ENCODE measurements at regions of chr14 and their contacts with region 1.

Region 1: GRCh38 chr14:51979088-51979709 is 10.1 kb upstream of the RTRAF start:
- DNase-seq: peak; percentile 43
- ATAC-seq: peak; percentile 86
- H3K4me3 ChIP-seq: no peak overlapping the region
- H3K27ac ChIP-seq: no peak overlapping the region
- H3K4me1 ChIP-seq: peaks cover 3% of the 10 kb centered on the region
- H3K27me3 ChIP-seq: no peaks in the 10 kb centered on the region
- CTCF ChIP-seq: peak; percentile 86 to 91 (median 87)
- EP300 ChIP-seq: no peak
- POLR2A ChIP-seq: no peak
- RAD21 ChIP-seq: peak; percentile 92

Region 2: DNA sequence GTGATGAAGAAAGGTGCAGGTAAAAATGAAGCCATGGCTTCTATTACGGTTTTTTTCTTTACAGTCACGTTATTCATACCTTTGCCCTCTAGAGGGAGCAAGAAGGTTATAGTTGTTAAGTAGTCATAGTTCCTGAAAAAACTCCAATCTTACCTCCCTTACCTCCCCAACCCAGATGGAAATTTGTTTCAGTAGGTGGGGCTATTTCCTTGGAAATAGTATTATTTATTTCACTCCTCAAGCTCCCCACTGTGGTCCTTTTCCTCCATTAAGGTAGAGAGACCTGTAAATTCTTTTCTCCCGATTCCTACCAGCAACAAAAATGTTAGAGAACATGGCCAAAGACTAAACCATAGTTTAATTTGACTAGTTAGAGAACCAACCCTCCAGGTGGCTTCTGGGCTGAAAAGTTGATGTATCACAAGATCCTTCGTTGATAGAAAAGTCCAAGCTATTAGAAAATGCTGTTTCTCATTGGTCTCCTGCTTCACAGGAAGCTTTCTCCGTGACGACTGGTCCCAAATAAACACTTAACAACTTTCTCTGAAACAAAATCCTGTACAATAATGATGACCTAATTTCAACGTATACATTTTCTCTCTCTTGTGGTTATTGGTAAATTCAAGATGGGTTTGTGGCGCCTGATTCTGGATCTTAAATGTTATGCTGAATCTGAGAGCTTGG is 695.7 kb before region 1 on chr14:
- CTCF ChIA-PET with region 1: interaction called, 10 read pairs
- POLR2A ChIA-PET with region 1: no interaction called
- RAD21 ChIA-PET with region 1: no interaction called
- SMC1A ChIA-PET with region 1: interaction called, 19 read pairs
- in situ Hi-C with region 1: no loop called
- intact Hi-C with region 1: loop called (anchors 5 kb)
- DNase-seq: no peak
- ATAC-seq: peak; percentile 55; the same call in 2 of the 3 replicates
- H3K4me3 ChIP-seq: no peak overlapping the region
- H3K27ac ChIP-seq: no peak overlapping the region
- H3K4me1 ChIP-seq: peaks cover 8% of the 10 kb centered on the region
- H3K27me3 ChIP-seq: no peaks in the 10 kb centered on the region
- CTCF ChIP-seq: peak; percentile 53 to 74 (median 55); a peak in 5 of 6 replicates
- EP300 ChIP-seq: no peak
- POLR2A ChIP-seq: no peak
- RAD21 ChIP-seq: peak; percentile 71

Region 3: DNA sequence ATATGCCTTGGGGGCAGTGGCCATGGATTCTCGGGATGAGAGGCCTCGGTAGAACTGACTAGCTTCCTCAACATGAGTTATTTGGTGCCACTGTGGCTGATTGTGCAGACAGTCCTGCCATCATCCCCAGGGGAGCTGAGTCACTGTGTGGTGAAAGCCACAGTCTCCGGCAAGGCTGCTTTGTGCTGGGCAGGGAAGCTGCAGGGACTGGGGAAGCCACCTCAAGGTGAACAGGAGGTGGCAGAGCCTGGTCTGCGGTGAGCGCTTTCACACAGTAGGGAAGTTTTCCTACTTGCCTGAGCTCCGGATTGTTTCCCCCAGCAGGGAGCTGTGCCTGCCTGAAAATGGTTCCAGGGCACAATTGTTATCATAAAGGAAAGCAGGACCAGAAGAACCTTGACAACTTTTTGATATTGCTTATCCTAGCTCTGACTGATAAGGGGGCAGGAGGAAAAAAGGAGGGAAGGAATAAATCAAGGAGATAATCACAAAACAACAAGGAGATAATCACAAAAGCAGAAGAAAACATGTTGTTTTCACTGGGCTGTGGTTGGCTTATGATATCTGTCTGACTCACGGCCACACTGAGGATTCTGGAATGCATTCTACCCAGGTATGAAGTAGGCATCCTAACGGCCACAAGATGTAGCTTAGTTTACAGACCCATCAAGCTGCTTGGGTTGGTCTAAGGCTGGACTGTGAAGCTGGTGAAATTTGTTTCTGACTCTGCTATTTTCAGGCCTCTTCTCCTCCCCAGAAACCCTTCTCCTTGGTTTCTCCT is 151.0 kb before region 1 on chr14:
- CTCF ChIA-PET with region 1: interaction called, 33 read pairs
- POLR2A ChIA-PET with region 1: no interaction called
- RAD21 ChIA-PET with region 1: interaction called, 17 read pairs
- SMC1A ChIA-PET with region 1: interaction called, 22 read pairs
- in situ Hi-C with region 1: no loop called
- intact Hi-C with region 1: no loop called
- DNase-seq: peak; percentile 74
- ATAC-seq: peak; percentile 99
- H3K4me3 ChIP-seq: no peak overlapping the region
- H3K27ac ChIP-seq: no peak overlapping the region
- H3K4me1 ChIP-seq: no peaks in the 10 kb centered on the region
- H3K27me3 ChIP-seq: no peaks in the 10 kb centered on the region
- CTCF ChIP-seq: peak in 1 of 3 experiments; percentile 26; a peak in 2 of 6 replicates
- EP300 ChIP-seq: peak in 1 of 2 experiments; percentile 17; a peak in 1 of 4 replicates
- POLR2A ChIP-seq: no peak
- RAD21 ChIP-seq: 0 out of 2 replicates have a peak, but pooled peaks have one; percentile 3

Region 4: GRCh38 chr14:51860164-51860824 is 118.9 kb before region 1 on chr14 and contains the start of gene GNG2:
- CTCF ChIA-PET with region 1: interaction called, 33 read pairs
- POLR2A ChIA-PET with region 1: interaction called, 3 read pairs
- RAD21 ChIA-PET with region 1: interaction called, 26 read pairs
- SMC1A ChIA-PET with region 1: interaction called, 26 read pairs
- in situ Hi-C with region 1: no loop called
- intact Hi-C with region 1: loop called (anchors 5 kb)
- DNase-seq: peak; percentile 71
- ATAC-seq: peak; percentile 88
- H3K4me3 ChIP-seq: peak within 1 kb of the TSS; percentile 90
- H3K27ac ChIP-seq: peak within 1 kb of the TSS; percentile 82
- H3K4me1 ChIP-seq: peaks cover 12% of the 10 kb centered on the region
- H3K27me3 ChIP-seq: no peaks in the 10 kb centered on the region
- CTCF ChIP-seq: no peak
- EP300 ChIP-seq: no peak
- POLR2A ChIP-seq: peak; percentile 94
- RAD21 ChIP-seq: no peak
- polyA plus RNA-seq, gene GNG2: 31.6 to 42.0 TPM

Region 5: DNA sequence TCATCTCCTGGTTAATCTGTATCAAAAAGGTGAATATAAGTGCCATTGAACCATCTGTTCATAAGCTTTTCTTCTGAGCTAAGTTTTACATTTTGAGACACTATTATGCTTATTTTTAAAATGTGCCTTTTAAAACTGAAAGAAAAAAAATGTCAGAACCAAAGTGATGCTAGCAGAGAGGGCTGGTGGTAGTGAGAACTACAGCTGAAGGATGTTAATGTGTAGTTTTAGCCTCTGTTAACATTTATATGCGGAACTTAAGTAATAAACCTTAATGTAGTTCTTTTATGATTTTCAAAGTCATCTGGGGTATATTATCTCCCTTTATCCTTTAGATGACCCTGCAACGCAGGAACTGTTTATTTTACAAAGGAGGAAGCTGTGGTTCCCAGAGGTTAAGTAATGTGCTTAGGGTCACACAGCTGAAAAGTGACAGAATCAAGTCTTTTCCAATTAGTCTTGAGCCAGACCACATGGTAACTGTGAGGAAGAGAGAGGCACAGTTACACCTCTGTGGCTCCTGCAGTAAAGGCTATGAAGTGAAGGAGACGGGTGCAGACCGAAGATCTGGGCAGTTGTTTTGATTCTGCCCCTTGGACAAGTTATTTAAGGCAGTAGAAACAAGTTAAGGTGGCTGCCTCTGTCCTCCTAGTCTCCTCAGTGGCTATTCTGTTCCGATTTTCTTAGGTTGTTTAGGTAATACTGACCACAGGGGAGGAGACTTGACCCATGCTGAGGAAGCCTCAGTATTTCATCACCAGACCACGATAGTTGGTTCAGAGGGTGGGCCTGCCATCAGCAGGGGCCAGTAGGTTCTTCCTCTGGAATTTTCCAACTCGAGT is 94.9 kb before region 1 on chr14:
- CTCF ChIA-PET with region 1: interaction called, 23 read pairs
- POLR2A ChIA-PET with region 1: no interaction called
- RAD21 ChIA-PET with region 1: interaction called, 7 read pairs
- SMC1A ChIA-PET with region 1: interaction called, 9 read pairs
- in situ Hi-C with region 1: no loop called
- intact Hi-C with region 1: no loop called
- DNase-seq: no peak
- ATAC-seq: peak; percentile 84
- H3K4me3 ChIP-seq: peak overlapping the region; percentile 4; the same call in 1 of the 2 replicates
- H3K27ac ChIP-seq: peak overlapping the region; percentile 34
- H3K4me1 ChIP-seq: peaks cover 38% of the 10 kb centered on the region
- H3K27me3 ChIP-seq: no peaks in the 10 kb centered on the region
- CTCF ChIP-seq: no peak
- EP300 ChIP-seq: peak in 1 of 2 experiments; percentile 56; a peak in 1 of 4 replicates
- POLR2A ChIP-seq: no peak
- RAD21 ChIP-seq: no peak

Region 6: DNA sequence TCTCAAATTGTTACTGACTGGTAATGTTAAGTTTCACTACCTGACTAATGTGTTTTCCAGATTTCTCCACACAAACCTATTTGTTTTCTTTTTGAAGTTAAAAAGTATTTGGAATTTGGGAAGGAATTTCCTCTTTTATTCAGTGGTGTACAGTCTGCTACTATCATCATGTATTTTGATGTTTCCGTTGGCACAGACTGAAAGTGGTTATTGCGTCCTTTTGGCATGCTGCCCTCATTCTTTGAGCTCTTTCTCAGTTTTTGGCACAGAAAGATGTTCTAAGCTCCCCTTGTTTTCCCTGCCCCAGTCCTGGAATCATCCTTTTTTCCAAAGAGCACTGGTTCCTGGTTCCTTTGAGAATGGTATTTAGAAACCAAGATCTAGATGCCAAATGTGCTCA is 21.2 kb before region 1 on chr14:
- CTCF ChIA-PET with region 1: interaction called, 11 read pairs
- POLR2A ChIA-PET with region 1: no interaction called
- RAD21 ChIA-PET with region 1: interaction called, 5 read pairs
- SMC1A ChIA-PET with region 1: interaction called, 7 read pairs
- in situ Hi-C with region 1: no loop called
- intact Hi-C with region 1: no loop called
- DNase-seq: no peak
- ATAC-seq: no peak
- H3K4me3 ChIP-seq: no peak overlapping the region
- H3K27ac ChIP-seq: no peak overlapping the region
- H3K4me1 ChIP-seq: no peaks in the 10 kb centered on the region
- H3K27me3 ChIP-seq: no peaks in the 10 kb centered on the region
- CTCF ChIP-seq: no peak
- EP300 ChIP-seq: no peak
- POLR2A ChIP-seq: no peak
- RAD21 ChIP-seq: no peak

Region 7: DNA sequence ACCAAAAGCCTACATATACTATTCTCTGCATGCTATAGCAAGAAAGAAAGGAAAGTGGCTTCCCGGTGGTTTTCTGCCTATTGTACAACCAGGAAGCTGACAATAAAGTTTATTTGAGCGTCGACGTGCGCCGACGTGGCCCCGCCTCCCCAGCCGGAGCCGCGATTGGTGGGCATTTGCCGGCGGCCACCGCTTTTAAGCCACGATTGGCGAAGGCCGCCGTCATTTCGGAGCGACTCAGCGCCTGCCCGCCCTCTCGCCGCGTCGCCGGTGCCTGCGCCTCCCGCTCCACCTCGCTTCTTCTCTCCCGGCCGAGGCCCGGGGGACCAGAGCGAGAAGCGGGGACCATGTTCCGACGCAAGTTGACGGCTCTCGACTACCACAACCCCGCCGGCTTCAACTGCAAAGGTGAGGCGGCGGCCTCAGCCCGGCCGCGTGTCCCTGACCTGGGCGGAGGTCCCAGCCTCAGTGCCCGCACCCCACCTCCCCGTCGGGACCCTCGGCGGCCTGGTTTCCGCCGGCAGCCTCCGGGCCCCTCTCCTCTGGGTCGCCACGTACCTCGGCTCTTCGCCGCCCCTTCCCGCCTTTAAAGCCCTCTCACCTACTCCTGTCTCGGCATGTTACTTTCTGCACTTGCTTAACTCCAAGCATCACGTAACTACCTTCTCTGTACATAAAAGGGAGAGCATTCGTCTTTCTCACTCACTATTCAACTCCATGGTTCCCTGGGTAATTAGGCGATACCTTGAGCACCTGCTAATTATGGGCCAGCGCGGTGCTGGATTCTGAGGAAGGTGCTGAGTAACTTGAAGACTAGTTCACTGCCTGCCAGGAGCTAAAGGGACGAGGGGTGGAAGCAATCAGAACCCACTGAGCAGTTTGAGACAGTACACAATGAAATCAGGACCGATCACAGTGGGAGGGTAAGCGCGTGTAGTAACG is 10.4 kb after region 1 on chr14 and contains the start of gene RTRAF:
- CTCF ChIA-PET with region 1: interaction called, 67 read pairs
- POLR2A ChIA-PET with region 1: interaction called, 3 read pairs
- RAD21 ChIA-PET with region 1: interaction called, 5 read pairs
- SMC1A ChIA-PET with region 1: interaction called, 16 read pairs
- in situ Hi-C with region 1: no loop called
- intact Hi-C with region 1: no loop called
- DNase-seq: peak; percentile 69
- ATAC-seq: peak; percentile 95
- H3K4me3 ChIP-seq: peak within 1 kb of the TSS; percentile 89
- H3K27ac ChIP-seq: peak within 1 kb of the TSS; percentile 88
- H3K4me1 ChIP-seq: peaks cover 6% of the 10 kb centered on the region
- H3K27me3 ChIP-seq: no peaks in the 10 kb centered on the region
- CTCF ChIP-seq: no peak
- EP300 ChIP-seq: no peak
- POLR2A ChIP-seq: peak; percentile 97
- RAD21 ChIP-seq: no peak
- polyA plus RNA-seq, gene RTRAF: 358 to 395 TPM

Region 8: GRCh38 chr14:52031781-52032180 is 52.6 kb after region 1 on chr14:
- CTCF ChIA-PET with region 1: no interaction called
- POLR2A ChIA-PET with region 1: no interaction called
- RAD21 ChIA-PET with region 1: no interaction called
- SMC1A ChIA-PET with region 1: no interaction called
- in situ Hi-C with region 1: no loop called
- intact Hi-C with region 1: no loop called
- DNase-seq: no peak
- ATAC-seq: no peak
- H3K4me3 ChIP-seq: no peak overlapping the region
- H3K27ac ChIP-seq: no peak overlapping the region
- H3K4me1 ChIP-seq: no peaks in the 10 kb centered on the region
- H3K27me3 ChIP-seq: no peaks in the 10 kb centered on the region
- CTCF ChIP-seq: no peak
- EP300 ChIP-seq: no peak
- POLR2A ChIP-seq: no peak
- RAD21 ChIP-seq: no peak

Measured in GM12878 (cell line).